ENCODE measurements at regions of chr3 and their contacts with region 1.

Region 1: DNA sequence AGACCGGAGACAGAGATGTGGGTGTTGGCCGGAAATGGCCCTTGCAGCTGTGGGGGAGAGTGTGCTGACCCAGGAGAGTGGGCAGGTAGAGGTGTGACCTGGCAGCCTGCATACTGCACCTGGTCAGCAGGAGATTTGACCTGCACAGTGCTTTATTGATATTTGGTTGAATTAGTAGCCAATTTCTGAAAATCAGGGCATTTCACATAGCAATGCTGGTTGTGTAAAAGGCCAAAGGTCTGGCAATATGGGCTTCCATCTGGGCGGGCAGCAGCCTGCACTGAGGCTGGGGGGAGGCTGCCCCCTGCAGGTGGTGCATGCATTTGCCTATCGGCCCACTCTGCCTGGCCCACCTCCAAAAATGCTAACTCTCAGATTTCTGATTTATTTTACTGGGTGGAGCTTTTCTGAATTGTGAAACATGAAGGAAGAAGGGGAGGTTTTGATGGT is 9.4 kb upstream of the MGLL start:
- DNase-seq: no peak
- H3K4me3 Mint-ChIP-seq: no peak overlapping the region
- H3K27ac Mint-ChIP-seq: no peak overlapping the region
- H3K4me1 Mint-ChIP-seq: peaks cover 8% of the 10 kb centered on the region
- H3K27me3 Mint-ChIP-seq: peaks cover 6% of the 10 kb centered on the region

Region 2: GRCh38 chr3:127574880-127575878 is 256.6 kb before region 1 on chr3:
- intact Hi-C with region 1: loop called (anchors 10 kb)
- DNase-seq: peak; percentile 83
- H3K4me3 Mint-ChIP-seq: no peak overlapping the region
- H3K27ac Mint-ChIP-seq: no peak overlapping the region
- H3K4me1 Mint-ChIP-seq: peaks cover 5% of the 10 kb centered on the region
- H3K27me3 Mint-ChIP-seq: no peaks in the 10 kb centered on the region

Region 3: DNA sequence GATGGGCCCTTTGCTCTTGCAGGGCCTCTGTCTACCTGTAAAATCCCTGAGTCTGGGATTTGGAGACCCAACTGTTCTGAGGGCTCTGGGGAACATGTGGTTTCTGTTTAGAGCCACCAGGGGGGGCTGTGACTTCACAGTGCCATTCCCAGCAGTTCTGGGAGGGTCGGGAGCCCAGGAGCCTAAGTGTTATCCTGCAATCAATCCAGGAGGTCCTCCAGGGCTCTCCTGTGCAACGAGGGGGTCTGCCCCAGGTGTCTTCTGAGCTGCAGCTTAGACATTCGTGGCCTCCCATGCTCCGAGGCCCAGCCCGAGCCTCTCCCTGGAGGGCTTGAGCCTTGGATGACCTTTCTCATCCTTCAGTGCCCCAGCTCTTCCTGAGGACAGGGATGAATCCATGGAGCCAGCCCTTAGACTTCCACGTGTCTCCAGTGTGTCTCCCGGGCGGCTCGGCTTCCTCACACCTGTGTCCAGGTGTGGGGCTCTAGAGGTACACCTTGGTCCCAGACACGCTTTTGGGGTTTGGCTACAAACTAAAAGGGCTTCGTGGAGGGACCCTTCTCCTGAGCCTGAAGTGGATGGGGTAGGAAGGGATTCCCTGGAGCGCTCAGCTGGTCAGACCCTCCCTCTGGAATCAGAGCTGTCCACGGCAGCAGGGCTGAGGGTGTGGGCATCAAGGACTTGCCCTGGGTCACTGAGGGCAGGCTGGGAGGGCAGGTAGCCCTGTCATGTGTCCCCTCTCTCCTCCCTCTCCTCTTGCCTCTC is 179.3 kb before region 1 on chr3:
- intact Hi-C with region 1: loop called (anchors 2 kb)
- DNase-seq: no peak
- H3K4me3 Mint-ChIP-seq: no peak overlapping the region
- H3K27ac Mint-ChIP-seq: no peak overlapping the region
- H3K4me1 Mint-ChIP-seq: no peaks in the 10 kb centered on the region
- H3K27me3 Mint-ChIP-seq: peaks cover 6% of the 10 kb centered on the region

Region 4: DNA sequence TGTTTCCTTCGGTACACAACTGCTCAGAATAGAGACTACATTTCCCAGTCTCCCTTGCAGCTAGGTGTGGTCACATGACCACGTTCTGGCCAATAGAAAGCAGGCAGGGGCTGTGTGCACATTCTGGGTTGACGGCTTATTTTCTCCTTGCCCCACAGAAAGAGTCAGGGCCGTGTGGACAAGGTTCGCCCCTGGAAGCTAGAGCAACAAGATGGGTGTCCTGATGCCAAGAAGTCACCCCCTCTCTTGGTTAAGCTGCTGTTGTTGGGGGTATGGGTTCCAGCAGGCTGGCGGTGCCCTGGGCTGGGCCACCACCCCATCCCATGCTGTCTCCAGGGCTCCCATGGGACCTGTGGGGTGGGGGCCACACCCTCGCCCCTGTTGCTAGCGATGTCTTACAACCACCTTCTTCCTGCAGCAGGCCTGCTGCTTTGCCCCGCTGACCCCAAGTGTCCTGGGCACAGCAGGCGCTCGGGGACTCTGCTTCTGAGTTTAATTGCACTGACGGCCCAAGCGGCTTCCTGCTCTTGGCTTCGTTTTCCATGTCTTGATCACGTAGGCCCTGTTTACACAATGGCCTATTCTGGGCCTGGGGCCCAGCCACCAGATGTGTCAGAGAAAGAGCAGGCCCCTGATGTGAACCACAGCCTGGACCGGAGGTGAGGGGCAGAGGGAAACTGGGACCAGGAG is 134.1 kb before region 1 on chr3:
- intact Hi-C with region 1: loop called (anchors 5 kb)
- DNase-seq: peak; percentile 38
- H3K4me3 Mint-ChIP-seq: no peak overlapping the region
- H3K27ac Mint-ChIP-seq: no peak overlapping the region
- H3K4me1 Mint-ChIP-seq: no peaks in the 10 kb centered on the region
- H3K27me3 Mint-ChIP-seq: no peaks in the 10 kb centered on the region